ENCODE measurements at regions of chr3 and their contacts with region 1.

Region 1: DNA sequence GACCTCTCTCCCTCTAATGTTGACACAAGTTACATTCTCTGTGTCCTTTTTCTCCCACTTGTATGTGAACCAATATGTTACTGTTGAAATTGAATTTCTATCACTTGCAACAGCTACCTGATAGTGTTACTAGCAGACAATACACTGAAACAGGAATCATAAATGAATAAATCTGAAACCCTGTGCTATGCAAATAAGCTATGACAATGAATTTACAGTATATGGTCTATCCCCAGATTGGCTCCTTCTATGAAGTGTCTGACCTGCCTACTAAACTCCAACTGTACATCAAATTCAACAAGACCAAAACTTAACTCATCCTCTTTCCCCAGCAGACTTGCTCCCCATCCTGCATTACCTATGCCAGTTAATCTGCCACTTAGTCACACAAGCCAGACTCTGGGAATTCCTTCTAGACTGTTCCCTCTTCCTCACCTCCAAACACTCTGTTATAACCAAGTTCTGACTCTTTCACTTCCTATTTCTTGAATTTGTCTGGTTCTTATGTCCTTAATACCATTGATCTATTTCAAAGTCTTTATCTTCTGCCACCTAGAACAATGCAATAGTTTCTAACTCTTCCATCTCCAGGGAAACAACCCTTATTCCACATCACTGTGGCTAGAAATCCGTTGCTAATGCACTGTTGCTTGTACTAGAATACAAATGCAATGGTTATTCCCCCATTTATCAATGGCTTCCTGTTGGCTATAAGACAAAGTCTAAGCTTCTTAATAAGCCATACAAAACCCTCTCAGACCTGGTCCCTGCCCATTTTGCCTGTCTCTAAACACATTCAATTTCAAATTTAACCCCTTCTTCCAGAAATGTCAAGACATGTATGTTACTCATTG is 13.4 kb upstream of the ZNF639 start:
- DNase-seq: no peak
- ATAC-seq: peak; percentile 95
- H3K4me3 ChIP-seq: no peak overlapping the region
- H3K27ac ChIP-seq: no peak overlapping the region
- H3K4me1 ChIP-seq: peaks cover 4% of the 10 kb centered on the region
- H3K27me3 ChIP-seq: no peaks in the 10 kb centered on the region
- CTCF ChIP-seq: no peak
- EP300 ChIP-seq: no peak
- POLR2A ChIP-seq: no peak
- RAD21 ChIP-seq: no peak

Region 2: DNA sequence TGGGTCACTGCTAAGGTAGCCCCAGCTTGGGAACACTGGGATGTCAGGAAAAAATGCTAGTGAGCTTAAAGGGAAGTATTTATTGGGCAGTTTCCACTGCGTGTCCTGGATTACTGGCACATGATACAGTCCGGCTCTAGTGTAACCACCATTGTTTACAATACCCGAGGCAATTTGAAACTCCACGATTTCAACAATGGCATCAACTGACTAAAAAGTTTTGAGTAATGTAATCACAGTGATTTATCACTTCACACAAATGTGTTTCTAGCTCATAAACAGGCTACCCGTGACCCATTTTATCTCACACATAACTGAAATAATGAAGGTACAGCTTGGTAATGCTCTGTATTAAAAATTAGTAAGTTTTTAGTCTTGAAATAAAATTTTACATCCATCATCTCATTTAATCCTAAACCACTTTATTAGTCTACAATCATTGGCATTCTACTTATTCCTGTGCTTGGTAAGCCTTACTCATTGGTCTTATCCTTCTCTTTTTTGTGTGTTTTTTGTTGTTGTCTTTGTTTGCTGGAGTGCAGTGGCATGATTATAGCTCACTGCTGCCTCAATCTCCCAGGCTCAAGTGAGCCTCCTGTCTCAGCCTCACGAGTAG is 245.4 kb before region 1 on chr3:
- CTCF ChIA-PET with region 1: interaction called, 114 read pairs
- POLR2A ChIA-PET with region 1: interaction called, 4 read pairs
- RAD21 ChIA-PET with region 1: interaction called, 40 read pairs
- SMC1A ChIA-PET with region 1: interaction called, 42 read pairs
- in situ Hi-C with region 1: no loop called
- intact Hi-C with region 1: no loop called
- DNase-seq: no peak
- ATAC-seq: no peak
- H3K4me3 ChIP-seq: peak overlapping the region; percentile 28; the same call in 1 of the 2 replicates
- H3K27ac ChIP-seq: no peak overlapping the region
- H3K4me1 ChIP-seq: no peaks in the 10 kb centered on the region; the same call in 1 of the 2 replicates
- H3K27me3 ChIP-seq: no peaks in the 10 kb centered on the region
- CTCF ChIP-seq: no peak
- EP300 ChIP-seq: no peak
- POLR2A ChIP-seq: no peak
- RAD21 ChIP-seq: no peak

Region 3: GRCh38 chr3:179098388-179099077 is 210.9 kb before region 1 on chr3:
- CTCF ChIA-PET with region 1: interaction called, 69 read pairs
- POLR2A ChIA-PET with region 1: no interaction called
- RAD21 ChIA-PET with region 1: interaction called, 29 read pairs
- SMC1A ChIA-PET with region 1: interaction called, 11 read pairs
- in situ Hi-C with region 1: loop called (anchors 10 kb)
- intact Hi-C with region 1: no loop called
- DNase-seq: no peak
- ATAC-seq: peak; percentile 21; the same call in 2 of the 3 replicates
- H3K4me3 ChIP-seq: no peak overlapping the region
- H3K27ac ChIP-seq: no peak overlapping the region
- H3K4me1 ChIP-seq: no peaks in the 10 kb centered on the region
- H3K27me3 ChIP-seq: no peaks in the 10 kb centered on the region
- CTCF ChIP-seq: no peak
- EP300 ChIP-seq: no peak
- POLR2A ChIP-seq: no peak
- RAD21 ChIP-seq: peak; percentile 6; the same call in 1 of the 2 replicates

Region 4: DNA sequence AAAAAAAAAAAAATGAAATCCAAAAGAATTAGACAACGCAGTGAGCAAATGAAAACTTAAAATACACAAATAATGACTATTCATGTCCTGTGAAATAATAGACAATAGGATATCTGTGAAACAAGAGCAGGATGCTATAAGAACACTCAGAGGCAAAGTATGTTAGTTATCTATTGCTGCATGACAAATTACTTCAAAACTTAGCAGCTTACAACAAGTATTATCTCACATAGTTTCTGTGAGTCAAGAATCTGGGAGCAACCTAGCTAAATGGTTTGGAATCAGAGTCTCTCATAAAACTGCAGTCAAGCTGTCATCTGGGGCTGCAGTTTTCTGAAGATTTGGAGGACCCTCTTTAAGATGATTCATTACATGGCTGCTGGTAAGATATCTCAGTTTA is 201.4 kb before region 1 on chr3:
- CTCF ChIA-PET with region 1: interaction called, 69 read pairs
- POLR2A ChIA-PET with region 1: no interaction called
- RAD21 ChIA-PET with region 1: interaction called, 29 read pairs
- SMC1A ChIA-PET with region 1: interaction called, 32 read pairs
- in situ Hi-C with region 1: loop called (anchors 10 kb)
- intact Hi-C with region 1: no loop called
- DNase-seq: no peak
- ATAC-seq: no peak
- H3K4me3 ChIP-seq: no peak overlapping the region
- H3K27ac ChIP-seq: no peak overlapping the region
- H3K4me1 ChIP-seq: peaks cover 3% of the 10 kb centered on the region; the same call in 1 of the 2 replicates
- H3K27me3 ChIP-seq: no peaks in the 10 kb centered on the region
- CTCF ChIP-seq: no peak
- EP300 ChIP-seq: no peak
- POLR2A ChIP-seq: no peak
- RAD21 ChIP-seq: no peak

Region 5: GRCh38 chr3:179288845-179289244 is 20.6 kb before region 1 on chr3:
- CTCF ChIA-PET with region 1: no interaction called
- POLR2A ChIA-PET with region 1: no interaction called
- RAD21 ChIA-PET with region 1: no interaction called
- SMC1A ChIA-PET with region 1: no interaction called
- in situ Hi-C with region 1: no loop called
- intact Hi-C with region 1: no loop called
- DNase-seq: no peak
- ATAC-seq: no peak
- H3K4me3 ChIP-seq: no peak overlapping the region
- H3K27ac ChIP-seq: no peak overlapping the region
- H3K4me1 ChIP-seq: no peaks in the 10 kb centered on the region
- H3K27me3 ChIP-seq: no peaks in the 10 kb centered on the region
- CTCF ChIP-seq: no peak
- EP300 ChIP-seq: no peak
- POLR2A ChIP-seq: no peak
- RAD21 ChIP-seq: no peak